B cell (primary cell): ENCODE measurements at regions of chr7 and their contacts with region 1.

Region 1: GRCh38 chr7:32221736-32222135 is 151.5 kb upstream of the PDE1C start:
- DNase-seq: no peak
- ATAC-seq: no peak
- H3K4me3 ChIP-seq: no peak overlapping the region
- H3K4me3 Mint-ChIP-seq: no peak overlapping the region
- H3K27ac ChIP-seq: no peak overlapping the region
- H3K27ac Mint-ChIP-seq: no peak overlapping the region
- H3K4me1 ChIP-seq: no peaks in the 10 kb centered on the region
- H3K4me1 Mint-ChIP-seq: no peaks in the 10 kb centered on the region
- H3K27me3 ChIP-seq: no peaks in the 10 kb centered on the region
- H3K27me3 Mint-ChIP-seq: peaks cover 5% of the 10 kb centered on the region
- CTCF ChIP-seq: no peak

Region 2: GRCh38 chr7:32204361-32205018 is 17.2 kb before region 1 on chr7:
- CTCF ChIA-PET with region 1: interaction called, 12 read pairs
- POLR2A ChIA-PET with region 1: no interaction called
- intact Hi-C with region 1: no loop called
- DNase-seq: no peak
- ATAC-seq: no peak
- H3K4me3 ChIP-seq: no peak overlapping the region
- H3K4me3 Mint-ChIP-seq: no peak overlapping the region
- H3K27ac ChIP-seq: no peak overlapping the region
- H3K27ac Mint-ChIP-seq: no peak overlapping the region
- H3K4me1 ChIP-seq: no peaks in the 10 kb centered on the region
- H3K4me1 Mint-ChIP-seq: no peaks in the 10 kb centered on the region
- H3K27me3 ChIP-seq: peaks cover 0 to 4% (median 0%) of the 10 kb centered on the region in 4 experiments
- H3K27me3 Mint-ChIP-seq: peaks cover 3% of the 10 kb centered on the region
- CTCF ChIP-seq: no peak